Left lung (tissue), 14 donors: ENCODE measurements at regions of chr17 and their contacts with region 1.

Region 1: DNA sequence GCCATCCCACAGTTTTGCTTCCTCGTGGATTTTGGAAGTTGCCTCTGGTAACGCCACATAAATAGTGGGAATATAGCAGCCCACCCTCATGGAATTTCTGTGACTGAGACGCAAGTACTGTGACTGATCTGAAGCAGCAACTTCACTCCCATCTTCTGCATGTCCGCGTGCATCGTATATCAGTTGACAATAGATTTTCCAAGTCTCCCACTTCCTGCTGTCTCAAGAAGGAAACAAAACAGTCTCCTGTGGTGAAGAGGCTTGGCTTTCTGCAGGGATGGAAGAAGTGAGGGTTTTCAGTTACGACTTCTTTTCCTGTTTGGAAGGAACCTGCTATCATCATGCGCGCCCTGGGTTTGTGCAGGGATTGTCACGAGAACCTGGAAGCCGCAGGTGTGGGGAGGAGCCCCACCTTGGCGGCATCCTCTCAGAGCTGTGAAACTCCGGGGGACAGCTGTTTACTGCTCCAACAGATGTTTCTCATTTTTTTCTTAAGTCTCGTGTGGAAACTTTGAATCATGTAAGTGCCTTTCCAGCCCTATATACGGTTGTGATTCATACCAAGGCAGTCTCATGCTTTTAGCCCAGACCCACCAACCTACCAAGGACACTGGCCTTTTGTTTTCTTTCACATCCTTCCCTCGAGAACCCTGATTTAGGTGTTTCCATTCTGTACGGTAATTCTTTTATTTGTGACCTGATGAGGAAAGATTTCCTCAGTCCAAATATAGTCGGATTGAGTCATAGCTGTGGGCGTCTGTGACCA is 57.5 kb downstream of the WIPI1 start:
- DNase-seq: no peak
- ATAC-seq: peak; percentile 33
- H3K4me3 ChIP-seq: no peak overlapping the region
- H3K27ac ChIP-seq: no peak overlapping the region
- H3K4me1 ChIP-seq: peaks cover 0 to 18% of the 10 kb centered on the region in 2 donors
- H3K27me3 ChIP-seq: no peaks in the 10 kb centered on the region
- CTCF ChIP-seq: no peak

Region 2: DNA sequence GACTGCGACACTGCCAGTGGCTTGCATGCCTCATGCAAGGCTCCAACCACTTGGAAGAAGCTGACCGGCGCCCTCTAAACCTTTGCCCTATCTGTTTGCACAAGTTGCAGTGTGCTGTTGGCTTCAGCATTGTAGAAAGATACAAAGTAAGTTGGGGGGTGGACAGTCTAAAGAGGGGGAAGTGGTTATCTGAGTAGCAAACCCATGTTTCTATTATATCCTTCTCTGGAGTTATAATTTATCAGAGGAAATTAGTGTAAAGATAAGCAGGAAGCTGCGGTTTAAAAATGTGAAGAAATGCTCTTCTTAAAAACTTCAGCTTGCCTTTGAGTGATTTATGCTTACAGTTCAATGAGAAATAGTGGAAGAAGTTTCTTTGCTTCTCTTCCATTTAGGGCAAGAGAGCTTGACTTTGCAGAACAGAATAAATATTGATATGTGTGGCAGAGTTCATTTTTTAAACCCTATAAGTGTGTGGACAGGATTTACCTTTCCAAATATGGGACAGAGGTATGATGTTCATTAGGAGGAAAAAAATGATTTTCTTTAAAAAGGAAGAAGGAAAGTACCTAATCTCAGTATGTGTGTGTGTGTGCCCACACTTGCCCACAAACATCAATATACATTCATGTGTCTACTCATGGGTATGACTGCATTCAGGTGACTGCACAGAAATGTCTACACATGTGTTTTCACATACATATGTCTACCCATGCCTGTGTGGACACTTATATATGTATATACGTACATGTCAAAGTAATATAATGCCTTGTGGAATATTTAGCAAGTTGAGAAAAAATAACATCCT is 143.9 kb before region 1 on chr17:
- intact Hi-C with region 1: no loop called
- DNase-seq: no peak
- ATAC-seq: peak; percentile 22
- H3K4me3 ChIP-seq: no peak overlapping the region
- H3K27ac ChIP-seq: peak overlapping the region in 1 of 2 donors; percentile 15
- H3K4me1 ChIP-seq: peaks cover 0 to 37% of the 10 kb centered on the region in 2 donors
- H3K27me3 ChIP-seq: no peaks in the 10 kb centered on the region
- CTCF ChIP-seq: no peak

Region 3: DNA sequence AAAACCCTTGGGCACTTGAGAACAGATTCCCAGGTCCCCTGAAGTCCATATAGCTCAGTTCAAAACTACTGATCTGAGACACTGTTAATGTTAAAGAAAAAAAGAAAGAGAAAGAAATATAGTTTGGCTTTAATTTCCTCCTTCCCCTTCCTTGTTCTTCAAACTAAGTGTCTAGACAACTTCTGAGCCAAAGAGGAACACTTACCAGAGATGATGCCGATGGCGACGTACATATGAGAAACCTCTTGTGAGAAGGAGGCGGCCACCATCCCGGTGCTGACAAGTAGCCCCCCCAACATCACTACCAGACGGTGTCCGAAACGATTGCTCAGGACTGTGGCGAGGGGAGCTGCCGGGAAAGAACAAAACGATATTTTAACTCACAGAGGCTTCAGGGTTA is 126.1 kb before region 1 on chr17:
- intact Hi-C with region 1: loop called in 1 of 2 experiments (anchors 10 kb)
- DNase-seq: no peak
- ATAC-seq: no peak
- H3K4me3 ChIP-seq: no peak overlapping the region
- H3K27ac ChIP-seq: no peak overlapping the region
- H3K4me1 ChIP-seq: no peaks in the 10 kb centered on the region
- H3K27me3 ChIP-seq: no peaks in the 10 kb centered on the region
- CTCF ChIP-seq: no peak